Activated CD4-positive, alpha-beta memory T cell treated with anti-CD3 and anti-CD28 coated beads, Interleukin-2, amount 10 ng/mL, durations not matched to agents 7 days and 5 days (primary cell): ENCODE measurements at regions of chr19 and their contacts with region 1.

Region 1: GRCh38 chr19:47013041-47013517 is 6.6 kb upstream of the NPAS1 start:
- DNase-seq: peak; percentile 66
- H3K4me3 Mint-ChIP-seq: no peak overlapping the region
- H3K27ac Mint-ChIP-seq: no peak overlapping the region
- H3K4me1 Mint-ChIP-seq: peaks cover 9% of the 10 kb centered on the region
- H3K27me3 Mint-ChIP-seq: peaks cover 15% of the 10 kb centered on the region

Region 2: DNA sequence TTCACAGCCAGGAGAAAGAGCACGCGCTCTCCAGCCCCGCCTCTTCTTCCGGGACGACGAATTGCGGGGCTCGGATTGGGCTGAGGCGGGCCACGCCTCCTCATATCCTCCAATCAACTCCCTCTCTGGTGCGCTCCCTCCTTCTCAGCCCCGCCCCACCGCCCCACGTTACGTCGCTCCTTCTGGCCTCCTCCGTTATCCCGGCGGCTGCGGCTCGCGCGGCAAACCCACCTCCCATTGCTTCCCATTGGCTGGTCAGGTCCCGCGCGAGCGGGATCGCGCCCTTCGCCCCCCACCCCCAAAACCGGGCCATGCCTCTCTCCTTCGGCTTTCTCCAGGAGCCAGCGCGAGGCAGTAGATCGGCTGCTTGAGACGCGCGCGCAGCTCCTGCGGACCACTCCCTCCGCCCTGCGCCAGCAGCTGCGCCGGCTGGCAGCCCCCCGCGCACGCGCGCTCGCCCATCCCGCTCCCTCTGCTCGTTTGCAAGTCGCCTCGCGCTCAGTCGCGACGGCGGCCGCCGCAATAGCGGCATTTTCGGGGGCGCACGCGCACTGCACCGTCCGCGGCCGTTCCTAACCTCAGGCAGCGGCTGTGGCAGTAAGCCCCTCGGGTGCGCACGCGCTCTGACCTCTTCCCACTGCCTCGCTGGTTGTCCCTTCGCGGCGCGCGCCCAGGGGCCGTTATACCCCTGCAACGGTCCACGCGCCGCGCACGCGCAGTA is 152.8 kb before region 1 on chr19:
- CTCF ChIA-PET with region 1: interaction called, 14 read pairs
- POLR2A ChIA-PET with region 1: no interaction called
- DNase-seq: peak; percentile 97
- H3K4me3 Mint-ChIP-seq: peak overlapping the region; percentile 77
- H3K27ac Mint-ChIP-seq: peak overlapping the region; percentile 88
- H3K4me1 Mint-ChIP-seq: peaks cover 26% of the 10 kb centered on the region
- H3K27me3 Mint-ChIP-seq: no peaks in the 10 kb centered on the region

Region 3: GRCh38 chr19:46924874-46925547 is 88.1 kb before region 1 on chr19:
- CTCF ChIA-PET with region 1: interaction called, 15 read pairs
- POLR2A ChIA-PET with region 1: no interaction called
- DNase-seq: peak; percentile 64
- H3K4me3 Mint-ChIP-seq: peak overlapping the region; percentile 22
- H3K27ac Mint-ChIP-seq: peak overlapping the region; percentile 74
- H3K4me1 Mint-ChIP-seq: peaks cover 52% of the 10 kb centered on the region
- H3K27me3 Mint-ChIP-seq: no peaks in the 10 kb centered on the region

Region 4: GRCh38 chr19:46990991-46991676 is 21.9 kb before region 1 on chr19:
- CTCF ChIA-PET with region 1: interaction called, 16 read pairs
- POLR2A ChIA-PET with region 1: no interaction called
- DNase-seq: peak; percentile 68
- H3K4me3 Mint-ChIP-seq: no peak overlapping the region
- H3K27ac Mint-ChIP-seq: peak overlapping the region; percentile 56
- H3K4me1 Mint-ChIP-seq: peaks cover 24% of the 10 kb centered on the region
- H3K27me3 Mint-ChIP-seq: no peaks in the 10 kb centered on the region

Region 5: DNA sequence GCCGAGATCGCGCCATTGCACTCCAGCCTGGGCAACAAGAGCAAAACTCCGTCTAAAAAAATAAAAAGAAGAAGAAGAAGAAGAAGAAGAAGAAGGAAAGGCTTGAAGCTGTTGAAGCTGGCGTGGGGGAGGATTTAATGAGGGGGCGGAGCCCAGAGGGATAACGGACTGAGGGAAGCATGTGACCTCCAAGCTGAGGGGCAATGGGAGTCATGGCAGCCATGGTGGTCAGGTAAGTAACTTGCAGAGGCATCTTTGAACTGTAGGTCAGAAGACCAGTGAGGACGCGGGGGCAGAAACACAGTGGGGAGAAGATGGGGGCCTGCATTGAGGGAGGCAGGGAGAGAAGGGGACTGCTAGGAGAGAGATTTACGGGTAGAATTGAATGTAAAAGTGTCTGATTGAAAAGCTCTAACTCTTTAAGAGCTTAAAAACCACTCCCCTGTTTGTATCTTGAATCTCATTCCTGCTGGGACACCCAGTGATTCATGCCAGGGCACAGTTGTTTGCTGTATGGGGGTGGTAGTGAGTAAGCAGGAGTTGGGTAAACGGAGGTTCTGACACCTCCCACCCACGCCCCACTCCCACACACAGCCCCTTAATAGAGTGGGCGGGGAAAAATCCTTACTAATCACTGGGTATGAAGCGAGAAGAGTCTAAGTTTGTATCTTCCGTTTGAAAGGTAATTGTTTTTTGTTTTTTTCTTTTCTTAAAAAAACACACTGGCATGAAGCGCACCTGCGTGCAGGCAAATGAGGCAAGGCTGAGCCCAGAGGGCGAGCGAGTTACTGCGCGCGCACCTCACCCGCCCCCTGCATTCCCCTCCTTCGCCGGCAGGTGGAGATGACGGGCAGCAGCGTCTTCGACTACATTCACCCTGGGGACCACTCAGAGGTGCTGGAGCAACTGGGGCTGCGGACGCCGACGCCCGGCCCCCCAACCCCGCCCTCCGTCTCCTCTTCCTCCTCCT is 22.3 kb after region 1 on chr19:
- CTCF ChIA-PET with region 1: interaction called, 35 read pairs
- POLR2A ChIA-PET with region 1: interaction called, 3 read pairs
- DNase-seq: peak; percentile 95
- H3K4me3 Mint-ChIP-seq: peak overlapping the region; percentile 75
- H3K27ac Mint-ChIP-seq: peak overlapping the region; percentile 37
- H3K4me1 Mint-ChIP-seq: peaks cover 22% of the 10 kb centered on the region
- H3K27me3 Mint-ChIP-seq: peaks cover 18% of the 10 kb centered on the region

Region 6: DNA sequence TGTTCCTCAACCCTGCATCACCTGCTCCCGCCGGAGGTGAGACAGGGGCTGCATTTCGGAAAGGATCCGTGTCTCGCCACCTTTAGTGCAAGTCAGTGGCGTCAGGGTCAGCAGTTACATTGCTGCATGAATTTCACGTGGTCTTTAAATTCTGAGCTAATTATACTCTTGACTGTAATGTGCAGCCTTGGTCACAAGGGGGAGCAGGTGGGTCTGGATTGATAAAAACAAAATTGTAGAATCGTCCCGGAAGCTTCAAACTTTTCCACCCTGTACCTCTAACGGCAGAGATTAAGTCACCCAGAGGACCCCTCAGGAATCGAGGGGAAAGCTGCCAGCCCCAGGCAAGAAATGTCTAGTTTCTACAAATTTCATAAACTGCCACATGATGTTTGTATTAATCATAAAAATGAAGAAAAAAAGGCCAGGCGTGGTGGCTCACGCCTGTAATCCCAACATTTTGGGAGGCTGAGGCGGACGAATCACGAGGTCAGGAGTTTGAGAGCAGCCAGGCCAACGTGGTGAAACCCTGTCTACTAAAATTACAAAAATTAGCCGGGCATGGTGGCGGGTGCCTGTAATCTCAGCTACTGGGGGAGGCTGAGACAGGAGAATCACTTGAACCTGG is 197.7 kb after region 1 on chr19:
- CTCF ChIA-PET with region 1: interaction called, 12 read pairs
- POLR2A ChIA-PET with region 1: no interaction called
- DNase-seq: peak; percentile 84
- H3K4me3 Mint-ChIP-seq: no peak overlapping the region
- H3K27ac Mint-ChIP-seq: peak overlapping the region; percentile 72
- H3K4me1 Mint-ChIP-seq: peaks cover 16% of the 10 kb centered on the region
- H3K27me3 Mint-ChIP-seq: no peaks in the 10 kb centered on the region